HEK293 (cell line): ENCODE measurements at regions of chr17 and their contacts with region 1.

Region 1: GRCh38 chr17:81959362-81960129 is 1.4 kb downstream of the NOTUM start:
- H3K4me3 ChIP-seq: peak overlapping the region; percentile 20
- H3K27ac ChIP-seq: peak overlapping the region; percentile 31; the same call in 1 of the 2 replicates
- H3K4me1 ChIP-seq: peaks cover 4% of the 10 kb centered on the region; the same call in 1 of the 2 replicates
- CTCF ChIP-seq: no peak

Region 2: GRCh38 chr17:81991684-81992305 is 32.2 kb after region 1 on chr17:
- CTCF ChIA-PET with region 1: interaction called, 12 read pairs
- POLR2A ChIA-PET with region 1: interaction called, 3 read pairs
- H3K4me3 ChIP-seq: no peak overlapping the region
- H3K27ac ChIP-seq: no peak overlapping the region
- H3K4me1 ChIP-seq: peaks cover 7% of the 10 kb centered on the region
- CTCF ChIP-seq: peak; percentile 52

Region 3: DNA sequence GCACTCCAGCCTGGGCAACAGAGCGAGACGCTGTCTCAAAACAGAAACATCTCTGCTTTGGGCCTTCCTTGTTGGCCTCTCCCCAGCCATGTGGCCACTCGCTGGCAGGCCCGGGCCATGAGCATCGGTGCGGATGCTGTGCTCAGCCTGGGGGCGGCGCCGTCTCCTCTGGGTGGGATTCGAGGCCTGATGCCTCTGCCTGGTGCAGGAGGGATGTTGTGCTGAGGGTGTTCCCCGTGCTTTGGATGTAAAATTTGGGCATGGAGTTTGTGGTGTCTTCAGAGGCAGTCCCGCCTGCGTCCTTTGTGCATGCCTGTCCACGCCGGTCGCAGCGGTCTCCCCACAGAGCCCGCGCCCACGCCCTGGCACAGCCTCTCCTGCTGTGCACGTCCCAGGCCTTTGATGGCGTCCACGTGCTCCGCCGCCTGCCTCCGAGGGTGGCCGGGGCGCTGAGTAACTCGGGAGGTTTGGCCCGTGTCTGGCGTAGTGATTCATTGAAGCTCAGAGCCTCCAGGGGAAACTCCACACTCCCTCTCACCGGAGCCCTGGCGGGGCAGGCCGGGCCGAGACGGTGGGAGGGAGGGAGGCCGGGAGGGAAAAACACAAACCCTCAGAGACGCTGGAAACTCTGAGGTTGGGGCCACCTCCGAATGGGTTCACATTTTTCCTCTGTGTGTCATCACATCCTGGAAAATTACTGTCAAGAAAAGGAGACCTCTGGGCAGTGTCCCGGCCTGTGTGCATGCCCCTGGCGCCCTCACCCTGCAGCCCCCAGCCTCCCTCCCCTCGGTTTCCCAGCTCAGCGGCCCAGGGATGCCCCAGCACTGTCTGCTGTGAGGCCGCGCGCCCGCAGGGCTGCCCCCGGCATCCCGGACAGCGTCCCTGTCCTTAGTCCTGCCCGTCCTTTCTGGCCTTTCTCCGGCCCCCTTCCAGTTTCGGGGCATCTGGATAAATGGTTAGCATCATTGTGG is 44.1 kb after region 1 on chr17:
- CTCF ChIA-PET with region 1: interaction called, 21 read pairs
- POLR2A ChIA-PET with region 1: interaction called, 3 read pairs
- H3K4me3 ChIP-seq: no peak overlapping the region
- H3K27ac ChIP-seq: peak overlapping the region; percentile 17; the same call in 1 of the 2 replicates
- H3K4me1 ChIP-seq: peaks cover 6% of the 10 kb centered on the region; the same call in 1 of the 2 replicates
- CTCF ChIP-seq: no peak